CD14-positive monocyte (primary cell): ENCODE measurements at regions of chr2 and their contacts with region 1.

Region 1: GRCh38 chr2:11446733-11447248 is 19.2 kb downstream of the E2F6 start:
- DNase-seq: peak; percentile 27 to 49 (median 44)
- H3K4me3 ChIP-seq: no peak overlapping the region
- H3K4me3 Mint-ChIP-seq: no peak overlapping the region
- H3K27ac ChIP-seq: no peak overlapping the region
- H3K27ac Mint-ChIP-seq: peak overlapping the region in 1 of 7 donors; percentile 22
- H3K4me1 ChIP-seq: no peaks in the 10 kb centered on the region
- H3K4me1 Mint-ChIP-seq: no peaks in the 10 kb centered on the region
- H3K27me3 ChIP-seq: no peaks in the 10 kb centered on the region
- H3K27me3 Mint-ChIP-seq: no peaks in the 10 kb centered on the region
- CTCF ChIP-seq: peak; percentile 85

Region 2: DNA sequence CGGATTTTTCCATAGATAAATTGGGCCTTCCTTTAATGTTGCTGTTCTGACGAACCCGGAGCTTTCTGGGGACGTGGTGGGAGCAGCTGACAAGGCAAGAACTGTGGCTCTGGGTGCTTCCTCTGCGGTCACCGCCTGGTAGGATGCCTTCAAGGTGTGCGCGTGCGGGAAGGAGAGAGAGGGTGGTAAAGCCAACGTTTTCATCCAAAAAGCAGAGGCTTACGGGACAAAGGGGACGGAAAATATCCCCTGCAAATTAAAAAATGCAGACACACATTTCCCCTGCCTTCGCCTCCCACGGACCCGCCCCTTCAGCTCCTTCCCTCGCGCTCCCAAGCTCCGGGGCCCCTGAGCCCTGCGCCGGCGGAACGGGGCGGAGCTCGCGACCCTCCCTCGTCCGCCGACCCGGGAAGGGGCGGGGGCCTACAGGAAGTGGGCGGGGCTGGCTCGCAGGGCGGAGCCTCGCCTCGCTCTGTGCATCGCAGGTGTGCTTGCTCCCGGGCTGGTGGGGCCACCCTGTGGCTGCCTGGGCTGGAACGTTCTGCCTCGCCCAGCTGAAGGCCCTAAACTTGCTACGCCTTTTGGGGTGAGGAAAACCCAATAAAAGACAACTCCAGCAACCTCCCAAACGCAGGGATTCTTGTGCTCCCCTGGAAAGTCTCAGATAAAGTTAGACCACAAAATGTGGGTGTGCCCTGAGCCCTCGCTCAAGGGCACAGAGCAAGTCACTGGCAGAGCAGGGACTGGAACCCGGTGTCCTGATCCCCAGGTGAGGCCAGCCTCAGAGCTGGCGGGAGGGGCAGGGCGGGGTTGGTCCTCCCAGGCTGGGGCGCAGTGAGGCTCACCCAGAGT is 317.0 kb before region 1 on chr2:
- intact Hi-C with region 1: loop called (anchors 2 to 5 kb)
- DNase-seq: no peak
- H3K4me3 ChIP-seq: peak overlapping the region in 1 of 3 experiments; percentile 71
- H3K4me3 Mint-ChIP-seq: peak overlapping the region; percentile 59 to 86
- H3K27ac ChIP-seq: no peak overlapping the region
- H3K27ac Mint-ChIP-seq: peak overlapping the region in 3 of 7 donors; percentile 41 to 80 (median 57)
- H3K4me1 ChIP-seq: peaks cover 24 to 27% of the 10 kb centered on the region in 2 donors
- H3K4me1 Mint-ChIP-seq: peaks cover 22% of the 10 kb centered on the region
- H3K27me3 ChIP-seq: peaks cover 0 to 25% of the 10 kb centered on the region in 2 donors
- H3K27me3 Mint-ChIP-seq: peaks cover 23 to 53% (median 32%) of the 10 kb centered on the region in 3 donors
- CTCF ChIP-seq: no peak